ENCODE measurements at regions of chr9 and their contacts with region 1.

Region 1: DNA sequence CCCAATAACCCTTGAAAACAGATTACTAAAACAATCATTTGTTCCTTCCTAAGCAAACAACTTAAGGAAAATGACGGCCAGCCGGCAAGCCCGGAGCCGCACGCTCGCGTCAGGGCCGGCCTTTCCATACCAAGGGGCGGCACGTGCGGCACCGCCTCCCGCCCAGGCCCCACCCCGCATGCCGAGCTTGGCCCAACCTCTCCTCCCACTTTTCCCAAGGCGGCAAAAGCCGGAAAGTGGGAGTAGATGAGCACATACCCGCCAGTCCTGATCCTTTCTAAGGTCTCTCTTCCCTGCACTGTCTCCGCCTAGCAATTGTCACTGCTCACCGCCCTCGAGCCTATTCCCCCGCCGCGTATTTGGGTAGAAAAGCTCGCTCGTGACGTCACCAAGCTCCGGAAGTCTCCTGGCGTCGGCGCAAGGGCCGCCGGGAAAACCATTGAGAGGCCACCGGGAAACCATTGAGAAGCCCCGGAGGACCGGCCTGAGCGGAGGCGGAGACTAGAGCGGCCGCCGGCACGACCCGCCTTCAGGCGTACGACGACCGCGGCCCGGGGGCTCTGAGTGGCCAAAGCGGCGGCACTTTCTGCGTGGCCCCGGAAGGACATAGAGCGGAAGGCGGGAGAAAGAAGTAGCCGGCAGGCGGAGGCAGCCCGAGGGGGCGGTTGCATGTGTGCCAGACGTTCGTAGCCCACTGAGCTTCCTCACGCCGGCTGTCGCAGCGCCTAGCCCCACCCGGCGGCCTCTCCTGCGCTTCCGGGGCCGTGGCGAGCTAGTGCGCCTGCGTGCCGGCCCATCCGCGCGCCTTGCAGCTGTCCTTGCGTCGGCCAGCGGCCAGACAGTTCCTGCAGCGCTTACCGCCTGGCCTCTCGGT is at the starts of genes NCBP1 and TSTD2:
- DNase-seq: peak; percentile 98
- H3K4me3 Mint-ChIP-seq: peak within 1 kb of the TSS; percentile 88
- H3K27ac Mint-ChIP-seq: peak within 1 kb of the TSS; percentile 97
- H3K4me1 Mint-ChIP-seq: peaks cover 53% of the 10 kb centered on the region
- H3K27me3 Mint-ChIP-seq: no peaks in the 10 kb centered on the region
- total RNA-seq, gene NCBP1: 32.4 to 33.9 TPM
- total RNA-seq, gene TSTD2: 11.1 to 12.4 TPM

Region 2: GRCh38 chr9:96854073-96854876 is 778.9 kb before region 1 on chr9 and contains the start of gene ZNF782:
- CTCF ChIA-PET with region 1: no interaction called
- intact Hi-C with region 1: loop called (anchors 1 kb)
- DNase-seq: peak; percentile 91
- H3K4me3 Mint-ChIP-seq: peak within 1 kb of the TSS; percentile 100
- H3K27ac Mint-ChIP-seq: peak within 1 kb of the TSS; percentile 97
- H3K4me1 Mint-ChIP-seq: peaks cover 35% of the 10 kb centered on the region
- H3K27me3 Mint-ChIP-seq: peaks cover 8% of the 10 kb centered on the region
- total RNA-seq, gene ZNF782: 2.2 to 2.8 TPM

Region 3: GRCh38 chr9:97598461-97599288 is 34.5 kb before region 1 on chr9:
- CTCF ChIA-PET with region 1: interaction called, 13 read pairs
- intact Hi-C with region 1: no loop called
- DNase-seq: peak; percentile 87
- H3K4me3 Mint-ChIP-seq: no peak overlapping the region
- H3K27ac Mint-ChIP-seq: no peak overlapping the region
- H3K4me1 Mint-ChIP-seq: peaks cover 4% of the 10 kb centered on the region
- H3K27me3 Mint-ChIP-seq: no peaks in the 10 kb centered on the region

Region 4: DNA sequence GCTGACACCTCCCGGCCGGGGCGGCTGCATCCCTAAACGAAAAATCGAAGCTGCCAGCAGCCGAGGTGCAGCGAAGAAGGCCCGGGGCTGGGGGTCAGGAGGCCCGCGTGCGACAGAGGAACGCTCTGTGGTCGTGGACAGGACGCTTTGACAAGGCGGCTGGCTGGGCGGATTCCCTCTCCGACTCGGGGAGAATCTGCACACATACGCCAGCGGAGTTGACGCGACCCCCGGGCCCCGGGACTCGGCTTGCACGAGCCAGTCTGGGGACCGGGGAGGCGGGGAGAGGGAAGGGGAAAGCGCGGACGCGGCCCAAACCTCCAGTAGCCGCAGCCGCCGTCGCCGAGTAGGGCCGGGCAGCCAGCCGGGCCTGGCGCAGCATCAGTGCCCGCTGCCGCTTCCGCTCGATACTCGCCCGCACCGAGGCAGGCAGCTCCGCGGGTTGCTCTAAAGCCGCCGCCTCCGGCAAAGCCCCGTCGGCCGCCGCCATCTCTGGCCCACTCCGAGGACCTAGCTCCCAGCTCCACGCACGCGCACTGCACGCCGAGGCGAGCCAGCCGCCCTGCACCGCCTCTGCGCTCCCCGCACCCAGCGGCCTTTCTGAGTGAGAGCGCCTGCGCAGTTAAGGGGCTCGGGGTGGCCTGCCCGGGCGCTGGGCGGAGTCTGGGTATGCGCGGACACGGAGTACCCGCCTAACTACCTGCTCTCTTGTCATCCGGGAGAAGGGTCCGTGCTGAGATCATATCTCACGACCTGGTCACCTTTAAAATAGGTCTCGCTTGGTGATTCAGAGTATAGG is 63.8 kb after region 1 on chr9 and contains the start of gene XPA:
- CTCF ChIA-PET with region 1: interaction called, 6 read pairs
- intact Hi-C with region 1: loop called (anchors 1 kb)
- DNase-seq: peak; percentile 97
- H3K4me3 Mint-ChIP-seq: peak within 1 kb of the TSS; percentile 88
- H3K27ac Mint-ChIP-seq: peak within 1 kb of the TSS; percentile 92
- H3K4me1 Mint-ChIP-seq: peaks cover 55% of the 10 kb centered on the region
- H3K27me3 Mint-ChIP-seq: no peaks in the 10 kb centered on the region
- total RNA-seq, gene XPA: 5.8 to 6.0 TPM

Region 5: DNA sequence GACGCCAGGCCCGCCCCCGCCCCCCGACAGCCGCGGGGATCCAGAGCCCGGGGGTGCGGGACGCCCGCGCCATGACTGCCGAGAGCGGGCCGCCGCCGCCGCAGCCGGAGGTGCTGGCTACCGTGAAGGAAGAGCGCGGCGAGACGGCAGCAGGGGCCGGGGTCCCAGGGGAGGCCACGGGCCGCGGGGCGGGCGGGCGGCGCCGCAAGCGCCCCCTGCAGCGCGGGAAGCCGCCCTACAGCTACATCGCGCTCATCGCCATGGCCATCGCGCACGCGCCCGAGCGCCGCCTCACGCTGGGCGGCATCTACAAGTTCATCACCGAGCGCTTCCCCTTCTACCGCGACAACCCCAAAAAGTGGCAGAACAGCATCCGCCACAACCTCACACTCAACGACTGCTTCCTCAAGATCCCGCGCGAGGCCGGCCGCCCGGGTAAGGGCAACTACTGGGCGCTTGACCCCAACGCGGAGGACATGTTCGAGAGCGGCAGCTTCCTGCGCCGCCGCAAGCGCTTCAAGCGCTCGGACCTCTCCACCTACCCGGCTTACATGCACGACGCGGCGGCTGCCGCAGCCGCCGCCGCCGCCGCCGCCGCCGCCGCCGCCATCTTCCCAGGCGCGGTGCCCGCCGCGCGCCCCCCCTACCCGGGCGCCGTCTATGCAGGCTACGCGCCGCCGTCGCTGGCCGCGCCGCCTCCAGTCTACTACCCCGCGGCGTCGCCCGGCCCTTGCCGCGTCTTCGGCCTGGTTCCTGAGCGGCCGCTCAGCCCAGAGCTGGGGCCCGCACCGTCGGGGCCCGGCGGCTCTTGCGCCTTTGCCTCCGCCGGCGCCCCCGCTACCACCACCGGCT is 220.8 kb after region 1 on chr9:
- CTCF ChIA-PET with region 1: no interaction called
- intact Hi-C with region 1: loop called (anchors 1 kb)
- DNase-seq: peak; percentile 78
- H3K4me3 Mint-ChIP-seq: peak overlapping the region; percentile 87
- H3K27ac Mint-ChIP-seq: peak overlapping the region; percentile 16
- H3K4me1 Mint-ChIP-seq: peaks cover 36% of the 10 kb centered on the region
- H3K27me3 Mint-ChIP-seq: peaks cover 74% of the 10 kb centered on the region

Region 6: DNA sequence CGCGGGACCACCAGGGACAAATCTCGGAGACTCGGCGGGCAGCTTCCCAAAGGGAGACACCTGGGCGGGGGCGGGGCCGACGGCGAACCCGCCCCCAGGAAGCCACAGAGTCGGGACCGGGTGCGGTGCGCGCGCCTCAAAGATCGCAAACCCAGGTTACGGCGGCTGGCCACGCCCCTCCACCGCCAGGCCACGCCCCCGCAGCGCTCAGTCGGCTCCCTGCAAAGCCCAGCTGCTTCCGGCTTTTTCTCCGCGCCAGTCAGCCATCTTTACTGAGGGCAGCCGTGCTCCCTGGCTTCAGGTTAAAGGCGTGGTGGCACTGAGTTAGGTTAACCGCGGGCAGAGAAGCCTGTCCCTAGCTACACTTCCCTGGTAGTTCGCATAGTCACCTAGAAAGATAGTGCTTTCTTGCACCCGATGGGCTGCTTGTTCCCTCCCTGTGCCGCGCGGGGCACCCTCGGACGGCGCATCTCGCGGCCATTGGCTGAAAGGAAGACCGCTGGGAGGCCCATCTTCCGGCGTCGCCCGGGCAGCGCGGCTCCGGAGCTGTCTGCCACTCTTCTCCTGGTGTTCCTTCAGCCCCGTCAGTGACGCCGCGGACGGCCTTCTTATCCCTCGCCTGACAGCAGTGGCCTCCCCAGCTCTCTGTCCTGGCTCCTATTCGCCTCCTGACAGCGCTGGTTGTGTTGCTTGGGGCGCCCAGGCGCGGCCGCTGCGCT is 622.5 kb after region 1 on chr9 and contains the start of gene TBC1D2:
- CTCF ChIA-PET with region 1: no interaction called
- intact Hi-C with region 1: loop called (anchors 5 kb)
- DNase-seq: peak; percentile 98
- H3K4me3 Mint-ChIP-seq: peak within 1 kb of the TSS; percentile 86
- H3K27ac Mint-ChIP-seq: peak within 1 kb of the TSS; percentile 97
- H3K4me1 Mint-ChIP-seq: peaks cover 25% of the 10 kb centered on the region
- H3K27me3 Mint-ChIP-seq: peaks cover 2% of the 10 kb centered on the region
- total RNA-seq, gene TBC1D2: 2.4 to 2.5 TPM